WTC11 (cell line): ENCODE measurements at regions of chr1 and their contacts with region 1.

Region 1: GRCh38 chr1:173429471-173430402 is 47.4 kb upstream of the PRDX6 start:
- DNase-seq: peak; percentile 69
- ATAC-seq: peak; percentile 90
- H3K4me3 Mint-ChIP-seq: peak overlapping the region; percentile 51
- H3K27ac Mint-ChIP-seq: peak overlapping the region; percentile 98
- H3K4me1 Mint-ChIP-seq: peaks cover 54% of the 10 kb centered on the region
- H3K27me3 Mint-ChIP-seq: no peaks in the 10 kb centered on the region
- CTCF ChIP-seq: no peak

Region 2: GRCh38 chr1:173405723-173406344 is 23.9 kb before region 1 on chr1:
- CTCF ChIA-PET with region 1: no interaction called
- POLR2A ChIA-PET with region 1: no interaction called
- DNase-seq: no peak
- ATAC-seq: no peak
- H3K4me3 Mint-ChIP-seq: no peak overlapping the region
- H3K27ac Mint-ChIP-seq: no peak overlapping the region
- H3K4me1 Mint-ChIP-seq: peaks cover 19% of the 10 kb centered on the region
- H3K27me3 Mint-ChIP-seq: no peaks in the 10 kb centered on the region; the same call in 1 of the 2 replicates
- CTCF ChIP-seq: no peak

Region 3: GRCh38 chr1:173448945-173449344 is 19.2 kb after region 1 on chr1:
- CTCF ChIA-PET with region 1: interaction called, 14 read pairs
- POLR2A ChIA-PET with region 1: interaction called, 4 read pairs
- DNase-seq: peak; percentile 16
- ATAC-seq: peak; percentile 92
- H3K4me3 Mint-ChIP-seq: peak overlapping the region; percentile 19; the same call in 1 of the 2 replicates
- H3K27ac Mint-ChIP-seq: peak overlapping the region; percentile 93
- H3K4me1 Mint-ChIP-seq: peaks cover 72% of the 10 kb centered on the region
- H3K27me3 Mint-ChIP-seq: no peaks in the 10 kb centered on the region
- CTCF ChIP-seq: no peak

Region 4: DNA sequence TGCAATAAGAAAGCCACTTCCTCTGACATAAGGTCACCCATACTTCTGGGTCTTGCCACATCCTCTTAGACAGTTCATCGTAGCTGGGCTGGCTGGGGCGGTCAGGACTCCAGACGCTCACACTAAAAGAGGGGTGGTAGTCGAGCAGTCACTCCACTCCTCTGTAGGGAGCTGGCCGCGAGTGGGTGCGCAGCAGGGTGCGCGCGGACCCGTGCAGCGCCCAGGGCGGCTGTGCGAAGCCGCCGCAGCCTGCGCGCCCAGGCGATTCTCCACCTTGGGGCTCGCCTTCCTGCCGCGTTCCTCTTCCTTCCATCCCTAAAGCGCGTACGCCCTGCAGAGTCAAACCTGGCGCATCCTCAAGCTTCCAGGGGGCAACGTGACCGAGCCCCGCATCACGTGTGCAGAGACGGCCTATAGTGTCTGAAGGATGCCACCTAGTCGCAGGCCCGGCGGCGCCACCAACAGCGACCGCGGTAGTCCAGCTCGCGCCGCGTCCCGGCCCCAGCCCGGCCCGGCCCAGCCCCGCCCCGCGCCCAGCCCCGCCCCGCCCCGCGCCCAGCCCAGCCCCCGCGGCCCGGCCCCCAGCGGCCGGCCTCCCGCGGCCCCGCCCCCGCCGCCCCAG is 47.0 kb after region 1 on chr1:
- CTCF ChIA-PET with region 1: interaction called, 28 read pairs
- POLR2A ChIA-PET with region 1: interaction called, 9 read pairs
- DNase-seq: peak; percentile 87
- ATAC-seq: peak; percentile 96
- H3K4me3 Mint-ChIP-seq: peak overlapping the region; percentile 94
- H3K27ac Mint-ChIP-seq: peak overlapping the region; percentile 89; the same call in 1 of the 2 replicates
- H3K4me1 Mint-ChIP-seq: peaks cover 41% of the 10 kb centered on the region
- H3K27me3 Mint-ChIP-seq: no peaks in the 10 kb centered on the region
- CTCF ChIP-seq: no peak

Region 5: DNA sequence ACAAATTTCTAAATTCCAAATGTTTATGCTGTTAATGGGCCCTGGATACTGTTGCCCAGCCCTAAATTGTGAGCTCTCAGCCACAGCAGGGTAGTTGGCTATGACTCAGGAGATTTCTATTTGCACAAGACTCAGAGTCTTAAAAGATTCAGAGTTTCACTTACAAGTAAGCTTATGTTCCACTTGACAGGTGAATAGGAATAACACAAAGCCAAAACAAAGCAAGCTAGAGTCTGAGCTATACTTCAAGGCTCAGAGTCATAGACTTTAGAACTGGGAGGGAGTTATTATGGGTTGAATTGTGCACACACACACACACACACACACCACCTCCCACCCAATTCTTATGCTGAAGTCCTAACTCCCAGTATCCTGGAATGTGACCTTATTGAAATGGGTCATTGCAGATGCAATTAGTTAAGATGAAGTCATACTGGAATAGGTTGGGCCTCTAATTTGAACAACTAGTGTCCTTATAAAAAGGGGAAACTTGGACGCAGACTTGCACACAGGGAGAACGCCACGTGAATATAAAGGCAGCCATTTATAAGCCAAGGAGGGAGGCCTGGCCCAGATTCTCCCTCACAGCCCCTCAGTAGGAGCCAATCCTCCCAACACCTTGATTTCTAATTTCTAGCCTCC is 77.6 kb after region 1 on chr1:
- CTCF ChIA-PET with region 1: interaction called, 40 read pairs
- POLR2A ChIA-PET with region 1: no interaction called
- DNase-seq: no peak
- ATAC-seq: peak; percentile 42
- H3K4me3 Mint-ChIP-seq: no peak overlapping the region
- H3K27ac Mint-ChIP-seq: peak overlapping the region; percentile 73; the same call in 1 of the 2 replicates
- H3K4me1 Mint-ChIP-seq: peaks cover 30% of the 10 kb centered on the region
- H3K27me3 Mint-ChIP-seq: no peaks in the 10 kb centered on the region; the same call in 1 of the 2 replicates
- CTCF ChIP-seq: no peak

Region 6: GRCh38 chr1:173824331-173825081 is 394.8 kb after region 1 on chr1 and contains the starts of genes CENPL and DARS2:
- CTCF ChIA-PET with region 1: interaction called, 11 read pairs
- POLR2A ChIA-PET with region 1: interaction called, 4 read pairs
- DNase-seq: peak; percentile 91
- ATAC-seq: peak; percentile 93
- H3K4me3 Mint-ChIP-seq: peak within 1 kb of the TSS; percentile 99
- H3K27ac Mint-ChIP-seq: peak within 1 kb of the TSS; percentile 99
- H3K4me1 Mint-ChIP-seq: peaks cover 16% of the 10 kb centered on the region
- H3K27me3 Mint-ChIP-seq: no peaks in the 10 kb centered on the region
- CTCF ChIP-seq: no peak
- total RNA-seq, gene CENPL: 17.2 to 20.1 TPM (median 18.3 TPM) in 3 replicates
- total RNA-seq, gene DARS2: 37.5 to 40.1 TPM (median 38.0 TPM) in 3 replicates